HCT116 (cell line): ENCODE measurements at regions of chr1 and their contacts with region 1.

Region 1: DNA sequence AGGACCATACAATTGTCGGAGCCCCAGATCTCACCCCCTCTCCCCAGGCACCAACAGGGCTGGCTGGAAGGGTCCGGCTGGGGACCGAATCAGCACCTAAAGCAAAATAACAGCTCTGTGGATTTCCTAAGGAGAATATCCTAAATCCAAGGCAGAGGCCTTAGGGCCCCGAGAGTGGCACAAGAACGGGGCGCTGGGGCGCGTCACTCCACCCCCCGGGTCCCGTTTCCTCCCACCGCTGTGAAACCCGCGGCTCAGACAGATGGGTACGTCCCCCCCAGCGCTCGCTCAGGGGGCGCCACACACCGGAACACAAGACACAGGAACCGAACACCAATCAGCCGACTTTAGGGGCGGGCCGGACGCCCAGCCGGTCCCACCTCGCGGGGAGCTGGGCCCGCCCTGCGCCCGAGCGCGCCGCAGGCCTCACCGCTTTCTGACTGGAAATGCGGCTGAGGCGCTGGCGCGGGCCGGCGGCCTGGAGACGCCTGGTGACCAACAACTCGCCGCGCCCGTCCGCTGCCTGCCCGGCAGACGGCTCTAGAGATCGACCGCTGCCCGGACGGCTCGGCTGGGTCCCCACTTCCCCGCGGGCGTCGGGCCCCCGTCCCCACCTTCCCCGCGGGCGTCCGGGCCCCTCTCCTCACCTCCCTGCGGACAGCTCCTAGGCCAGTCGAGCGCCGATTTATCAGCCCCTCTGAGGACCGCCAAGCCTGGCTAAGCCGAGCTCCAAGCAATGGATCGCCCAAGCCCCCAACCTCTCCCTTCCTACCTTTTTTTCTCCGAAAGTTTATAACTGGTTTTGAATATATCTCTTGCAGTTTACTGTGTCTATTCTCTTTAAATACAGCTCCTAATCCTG is at the start of gene HFM1:
- DNase-seq: peak; percentile 41
- ATAC-seq: peak; percentile 93
- H3K4me3 ChIP-seq: peak within 1 kb of the TSS; percentile 50 to 58
- H3K27ac ChIP-seq: no peak within 1 kb of the TSS; the same call in 1 of the 2 replicates
- H3K4me1 ChIP-seq: peaks cover 0 to 3% of the 10 kb centered on the region in 2 experiments; a peak in 1 of 4 replicates
- H3K27me3 ChIP-seq: no peaks in the 10 kb centered on the region
- CTCF ChIP-seq: no peak
- POLR2A ChIP-seq: no peak
- RAD21 ChIP-seq: no peak
- total RNA-seq, gene HFM1: 0.07 TPM

Region 2: DNA sequence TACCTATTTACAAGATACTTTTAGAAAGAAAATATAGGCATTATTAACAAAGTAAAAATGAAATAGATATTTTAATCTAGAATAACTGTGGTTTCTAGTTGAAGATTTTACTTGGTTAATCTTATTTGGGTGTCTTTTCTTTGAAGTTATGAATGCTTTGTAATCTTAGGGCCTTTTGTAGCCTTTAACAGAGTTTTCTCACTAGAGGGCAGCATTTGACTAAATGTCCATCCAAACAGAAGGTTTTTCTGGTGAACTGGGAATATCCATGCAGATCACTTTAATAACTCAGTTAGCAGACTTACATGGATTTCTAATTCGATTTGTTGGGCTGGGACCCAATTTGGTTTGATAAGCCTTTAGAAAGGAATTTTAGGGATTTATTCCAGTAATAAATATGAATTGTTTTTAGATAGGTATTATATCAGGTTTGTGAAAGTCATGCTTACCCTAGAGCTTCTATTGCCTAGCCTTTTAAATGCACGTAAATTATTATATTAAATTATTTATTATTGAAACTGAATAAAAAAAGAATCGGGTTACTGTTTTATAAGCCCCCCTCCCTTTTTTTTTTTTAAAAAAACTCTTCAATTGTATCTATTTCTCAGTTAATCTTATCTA is 1289.8 kb before region 1 on chr1:
- CTCF ChIA-PET with region 1: no interaction called
- POLR2A ChIA-PET with region 1: no interaction called
- RAD21 ChIA-PET with region 1: no interaction called
- intact Hi-C with region 1: loop called (anchors 10 kb)
- DNase-seq: peak; percentile 56
- ATAC-seq: peak; percentile 74; the same call in 1 of the 2 replicates
- H3K4me3 ChIP-seq: no peak overlapping the region
- H3K27ac ChIP-seq: no peak overlapping the region
- H3K4me1 ChIP-seq: no peaks in the 10 kb centered on the region
- H3K27me3 ChIP-seq: peaks cover 44% of the 10 kb centered on the region
- CTCF ChIP-seq: peak; percentile 53 to 81 (median 69); a peak in 5 of 6 replicates
- POLR2A ChIP-seq: no peak
- RAD21 ChIP-seq: peak; percentile 75

Region 3: GRCh38 chr1:91500756-91501522 is 96.6 kb after region 1 on chr1 and contains the start of gene CDC7:
- CTCF ChIA-PET with region 1: interaction called, 4 read pairs
- POLR2A ChIA-PET with region 1: no interaction called
- RAD21 ChIA-PET with region 1: no interaction called
- intact Hi-C with region 1: loop called (anchors 5 kb)
- DNase-seq: peak; percentile 85
- ATAC-seq: peak; percentile 89
- H3K4me3 ChIP-seq: peak within 1 kb of the TSS; percentile 61 to 63
- H3K27ac ChIP-seq: peak within 1 kb of the TSS; percentile 90
- H3K4me1 ChIP-seq: peaks cover 7 to 27% of the 10 kb centered on the region in 2 experiments
- H3K27me3 ChIP-seq: no peaks in the 10 kb centered on the region
- CTCF ChIP-seq: peak in 2 of 3 experiments; percentile 35 to 38; a peak in 5 of 6 replicates
- POLR2A ChIP-seq: peak; percentile 48
- RAD21 ChIP-seq: 0 out of 2 replicates have a peak, but pooled peaks have one; percentile 35
- total RNA-seq, gene CDC7: 24.5 TPM

Region 4: DNA sequence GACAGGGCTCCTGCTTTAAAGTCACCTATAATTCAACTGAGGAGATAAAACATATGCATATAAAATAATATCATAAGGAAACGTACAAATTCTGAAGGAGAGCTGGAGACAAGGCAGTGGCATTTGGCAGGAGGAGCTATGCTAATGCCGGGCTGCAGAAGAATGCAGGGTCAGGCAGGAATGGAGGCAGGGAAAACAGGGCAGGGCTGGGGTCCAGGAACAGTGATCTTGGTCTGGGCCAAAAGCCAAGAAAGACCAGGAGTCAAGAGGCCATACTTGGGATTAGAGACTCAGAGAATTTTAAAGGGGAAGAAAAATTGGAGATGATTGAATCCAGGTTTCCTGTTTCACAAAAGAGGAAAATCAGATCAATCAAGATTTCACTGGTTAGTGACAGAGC is 524.9 kb after region 1 on chr1:
- CTCF ChIA-PET with region 1: no interaction called
- POLR2A ChIA-PET with region 1: no interaction called
- RAD21 ChIA-PET with region 1: no interaction called
- intact Hi-C with region 1: loop called (anchors 5 kb)
- DNase-seq: no peak
- ATAC-seq: no peak
- H3K4me3 ChIP-seq: no peak overlapping the region
- H3K27ac ChIP-seq: no peak overlapping the region
- H3K4me1 ChIP-seq: peaks cover 2 to 4% of the 10 kb centered on the region in 2 experiments; a peak in 1 of 4 replicates
- H3K27me3 ChIP-seq: no peaks in the 10 kb centered on the region
- CTCF ChIP-seq: no peak
- POLR2A ChIP-seq: no peak
- RAD21 ChIP-seq: no peak